ENCODE measurements at regions of chr1 and their contacts with region 1.

Region 1: DNA sequence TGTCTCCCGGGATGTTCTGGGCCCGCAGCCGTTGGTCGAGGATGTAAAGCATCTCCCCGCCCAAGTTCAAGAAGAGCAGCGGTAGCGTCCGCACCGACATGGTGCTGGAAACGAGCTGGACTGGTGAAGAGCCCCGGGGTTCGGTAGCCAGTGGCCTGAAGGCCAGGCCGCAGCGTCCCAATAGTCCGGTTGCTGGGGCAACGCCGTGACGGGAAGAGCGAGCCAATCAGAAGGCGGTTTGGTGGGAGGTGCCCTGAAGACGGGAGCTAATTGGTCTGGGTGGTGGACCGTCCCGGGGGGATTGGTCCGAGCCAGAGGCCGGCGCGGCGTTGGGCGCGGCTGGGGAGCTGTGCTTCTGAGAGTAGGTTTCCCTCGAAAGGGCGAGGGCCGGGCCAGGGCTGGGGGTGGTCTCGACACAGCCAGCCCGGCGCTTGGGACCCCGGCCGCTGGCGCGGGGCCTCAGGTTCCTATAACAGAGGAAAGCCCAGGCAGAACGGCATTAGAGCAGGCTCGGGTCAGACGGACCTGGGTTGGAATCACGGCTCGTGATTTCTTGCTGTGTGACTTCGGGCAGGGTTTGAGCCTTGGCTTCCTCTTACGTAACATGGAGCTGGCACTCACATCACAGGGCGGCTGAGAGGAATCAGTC is at the start of gene OSCP1:
- DNase-seq: peak; percentile 85
- ATAC-seq: peak; percentile 99
- H3K4me3 ChIP-seq: peak within 1 kb of the TSS; percentile 94
- H3K27ac ChIP-seq: peak within 1 kb of the TSS; percentile 62
- H3K4me1 ChIP-seq: no peaks in the 10 kb centered on the region
- H3K27me3 ChIP-seq: no peaks in the 10 kb centered on the region
- CTCF ChIP-seq: no peak
- EP300 ChIP-seq: no peak
- POLR2A ChIP-seq: peak; percentile 91
- RAD21 ChIP-seq: no peak
- polyA plus RNA-seq, gene OSCP1: 5.5 to 5.9 TPM

Region 2: GRCh38 chr1:36463803-36464604 is 13.6 kb after region 1 on chr1 and contains the start of gene MRPS15:
- CTCF ChIA-PET with region 1: interaction called, 9 read pairs
- POLR2A ChIA-PET with region 1: interaction called, 11 read pairs
- RAD21 ChIA-PET with region 1: interaction called, 3 read pairs
- SMC1A ChIA-PET with region 1: no interaction called
- in situ Hi-C with region 1: no loop called
- intact Hi-C with region 1: no loop called
- DNase-seq: peak; percentile 82
- ATAC-seq: peak; percentile 94
- H3K4me3 ChIP-seq: peak within 1 kb of the TSS; percentile 87
- H3K27ac ChIP-seq: peak within 1 kb of the TSS; percentile 85
- H3K4me1 ChIP-seq: peaks cover under 1% of the 10 kb centered on the region; the same call in 1 of the 2 replicates
- H3K27me3 ChIP-seq: no peaks in the 10 kb centered on the region
- CTCF ChIP-seq: no peak
- EP300 ChIP-seq: 0 out of 4 replicates have a peak, but pooled peaks of 1 of the 2 experiments have one; percentile 25
- POLR2A ChIP-seq: peak; percentile 92
- RAD21 ChIP-seq: no peak
- polyA plus RNA-seq, gene MRPS15: 41.1 to 72.0 TPM